ENCODE measurements at regions of chr10 and their contacts with region 1.

Region 1: DNA sequence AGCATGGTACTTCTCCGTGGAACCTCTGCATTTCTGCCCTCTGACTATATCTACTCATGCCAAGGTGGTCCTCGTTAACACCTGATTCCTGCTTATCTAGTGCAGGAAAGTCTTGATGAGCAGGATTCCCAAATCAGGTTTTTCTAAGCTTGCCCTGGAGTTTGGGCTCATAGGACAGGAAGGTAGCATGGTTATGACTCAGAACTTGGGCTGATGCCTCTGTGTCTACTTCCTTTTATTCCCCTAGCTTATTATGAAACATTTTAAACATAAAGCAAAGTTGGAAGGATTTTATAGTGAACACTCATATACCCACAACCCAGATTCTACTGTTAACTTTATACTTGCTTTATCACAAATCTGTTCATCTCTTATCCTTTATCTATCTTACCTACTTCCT is 5.6 kb downstream of the SUFU start:
- DNase-seq: no peak

Region 2: DNA sequence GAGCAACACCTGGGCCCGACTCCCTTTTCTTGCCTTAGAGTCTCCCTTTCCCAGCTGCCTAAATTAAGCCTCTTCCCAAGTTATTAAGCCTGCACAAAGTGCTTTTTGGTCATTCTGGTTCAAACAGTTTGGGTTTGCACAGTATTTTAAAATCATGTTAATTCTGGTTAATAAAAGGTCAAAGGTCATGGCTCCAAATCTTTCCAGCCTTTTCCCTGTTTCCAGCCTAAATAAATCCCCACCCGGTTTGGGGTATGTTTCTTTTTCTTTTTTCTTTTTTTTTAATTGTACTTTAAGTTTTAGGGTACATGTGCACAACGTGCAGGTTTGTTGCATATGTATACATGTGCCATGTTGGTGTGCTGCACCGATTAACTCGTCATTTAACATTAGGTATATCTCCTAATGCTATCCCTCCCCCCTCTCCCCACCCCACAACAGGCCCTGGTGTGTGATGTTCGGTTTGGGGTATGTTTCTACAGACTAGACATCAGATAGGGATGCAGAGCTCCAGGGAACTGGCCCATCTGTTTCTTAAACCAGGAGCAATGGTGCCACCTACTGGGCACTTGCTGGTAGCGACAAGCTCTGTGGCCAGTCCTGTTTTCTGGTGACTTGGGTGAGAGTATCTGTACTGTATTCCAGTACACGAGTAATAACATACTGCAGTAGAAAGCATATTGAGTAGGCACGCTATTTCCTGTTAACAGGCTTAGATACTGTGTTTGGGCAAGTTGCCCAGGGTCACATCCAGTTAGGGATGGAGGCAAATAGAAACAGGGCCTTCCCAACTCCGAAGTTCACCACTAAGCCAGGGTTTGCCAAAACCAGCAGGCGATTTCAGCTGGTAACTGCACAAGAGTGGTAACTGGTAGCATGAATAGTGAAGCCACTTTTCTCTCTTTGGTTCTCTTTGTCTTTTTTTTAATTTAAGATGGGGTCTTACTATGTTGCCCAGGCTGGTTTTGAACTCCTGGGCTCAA is 74.3 kb after region 1 on chr10:
- intact Hi-C with region 1: loop called (anchors 5 kb)
- DNase-seq: peak; percentile 95

Measured in posterior vena cava (tissue), 2 donors.